ENCODE measurements at regions of chr12 and their contacts with region 1.

Region 1: GRCh38 chr12:49098035-49098451 is 3.4 kb upstream of the DHH start:
- DNase-seq: peak; percentile 74
- ATAC-seq: peak; percentile 77
- H3K4me3 ChIP-seq: no peak overlapping the region
- H3K4me3 Mint-ChIP-seq: no peak overlapping the region
- H3K27ac ChIP-seq: no peak overlapping the region
- H3K27ac Mint-ChIP-seq: peak overlapping the region; percentile 20
- H3K4me1 ChIP-seq: peaks cover 15 to 16% of the 10 kb centered on the region in 2 donors
- H3K4me1 Mint-ChIP-seq: peaks cover 18% of the 10 kb centered on the region
- H3K27me3 ChIP-seq: peaks cover 0 to 22% (median 17%) of the 10 kb centered on the region in 4 experiments
- H3K27me3 Mint-ChIP-seq: peaks cover 17% of the 10 kb centered on the region
- CTCF ChIP-seq: peak; percentile 80

Region 2: DNA sequence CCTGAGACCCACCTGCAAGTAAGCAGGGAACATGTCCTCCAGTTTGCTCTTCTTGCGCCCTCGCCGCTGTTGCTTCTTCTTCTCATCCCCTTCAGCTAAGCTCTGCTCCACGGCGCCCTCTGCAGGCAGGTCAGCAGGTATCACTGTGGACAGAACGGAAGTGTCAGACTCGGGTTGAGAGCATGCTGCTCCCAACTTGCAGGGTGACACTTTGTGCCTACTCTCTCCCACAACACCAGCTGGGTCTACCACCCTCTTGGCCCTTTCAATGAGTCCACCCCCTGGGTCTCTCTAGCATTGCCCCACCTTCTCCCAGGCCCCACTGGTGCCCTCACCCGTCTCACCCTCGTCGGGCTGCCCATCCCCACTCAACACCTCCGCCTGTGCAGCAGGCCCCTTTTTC is 54.2 kb before region 1 on chr12:
- CTCF ChIA-PET with region 1: interaction called, 10 read pairs
- POLR2A ChIA-PET with region 1: no interaction called
- intact Hi-C with region 1: no loop called
- DNase-seq: peak; percentile 79
- ATAC-seq: peak; percentile 78
- H3K4me3 ChIP-seq: no peak overlapping the region
- H3K4me3 Mint-ChIP-seq: no peak overlapping the region
- H3K27ac ChIP-seq: no peak overlapping the region
- H3K27ac Mint-ChIP-seq: peak overlapping the region; percentile 3
- H3K4me1 ChIP-seq: no peaks in the 10 kb centered on the region
- H3K4me1 Mint-ChIP-seq: peaks cover 2% of the 10 kb centered on the region
- H3K27me3 ChIP-seq: no peaks in the 10 kb centered on the region
- H3K27me3 Mint-ChIP-seq: no peaks in the 10 kb centered on the region
- CTCF ChIP-seq: peak; percentile 80

Measured in B cell (primary cell).